Dendritic cell treated with granulocyte-macrophage colony-stimulating factor and Interleukin-4, amounts not matched to agents 40 ng/mL and 50 ng/mL, for 4 days (primary cell): ENCODE measurements at regions of chr14 and their contacts with region 1.

Region 1: DNA sequence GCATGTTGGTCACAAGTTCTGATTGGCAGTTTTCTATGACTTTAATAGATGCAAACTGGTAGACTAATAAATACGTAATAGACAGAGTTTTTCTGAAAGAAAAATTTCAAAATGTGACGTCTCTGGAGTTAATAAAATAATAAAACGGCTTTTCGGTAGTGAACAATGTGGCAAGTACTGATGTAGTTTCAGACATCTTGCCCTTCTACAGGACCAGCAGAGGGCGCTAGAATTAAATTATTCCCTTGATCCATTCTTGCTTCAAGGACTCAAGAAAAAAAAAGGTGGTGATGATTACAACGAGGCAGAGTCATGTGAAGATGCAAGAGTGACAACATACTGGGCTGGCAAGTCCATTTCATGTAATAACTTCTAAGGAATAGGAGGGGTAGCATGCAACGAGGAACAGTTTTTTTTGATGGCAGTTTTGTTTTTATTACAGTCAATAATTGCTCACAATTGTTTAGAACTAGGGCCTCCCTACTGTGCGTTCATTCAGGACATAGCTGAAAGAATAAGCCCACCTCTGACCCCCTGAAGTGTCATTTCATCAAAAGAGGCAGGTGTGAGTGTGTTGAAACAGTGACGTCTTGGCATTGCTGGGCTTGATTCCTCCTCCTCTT is 101.0 kb upstream of the GZMB start:
- H3K4me3 Mint-ChIP-seq: no peak overlapping the region
- H3K27ac Mint-ChIP-seq: no peak overlapping the region
- H3K4me1 Mint-ChIP-seq: no peaks in the 10 kb centered on the region
- H3K27me3 Mint-ChIP-seq: no peaks in the 10 kb centered on the region

Region 2: GRCh38 chr14:24818058-24818822 is 83.3 kb after region 1 on chr14:
- intact Hi-C with region 1: no loop called
- H3K4me3 Mint-ChIP-seq: no peak overlapping the region
- H3K27ac Mint-ChIP-seq: no peak overlapping the region
- H3K4me1 Mint-ChIP-seq: no peaks in the 10 kb centered on the region
- H3K27me3 Mint-ChIP-seq: peaks cover 9% of the 10 kb centered on the region

Region 3: DNA sequence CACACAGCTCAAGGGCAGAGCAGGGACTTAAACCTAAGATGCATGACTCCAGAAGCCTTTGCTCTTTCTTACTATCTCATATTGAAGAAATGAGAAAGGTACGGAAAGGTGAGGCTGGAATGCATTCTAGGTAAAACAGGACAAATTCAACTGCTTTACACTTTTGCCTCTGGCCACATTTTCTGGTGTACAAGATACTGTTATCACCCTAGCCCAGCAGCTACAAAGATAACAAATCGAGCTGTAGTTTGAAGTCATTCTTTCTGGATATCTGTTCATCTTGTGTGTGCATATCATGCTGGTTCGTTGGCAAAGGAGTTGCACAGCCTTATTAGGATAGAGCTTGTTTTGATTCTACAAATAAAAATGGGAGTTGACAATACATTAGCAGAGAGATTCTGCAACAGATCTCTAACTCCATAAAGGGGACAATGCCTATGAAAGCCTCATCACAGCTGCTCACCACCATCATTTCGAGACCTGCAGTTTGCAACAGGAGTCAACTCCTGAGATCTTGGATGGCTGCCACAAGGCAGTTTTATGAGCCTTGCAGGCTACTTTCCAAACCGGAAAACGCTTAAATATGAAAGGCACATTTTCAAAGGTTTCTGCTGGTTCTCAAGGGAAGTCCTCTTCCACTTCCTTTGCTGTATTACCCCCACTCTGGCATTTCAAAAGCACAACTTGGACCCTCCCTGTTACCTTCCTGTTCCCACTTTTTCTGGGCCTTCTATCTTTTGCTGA is 250.0 kb after region 1 on chr14:
- intact Hi-C with region 1: no loop called
- H3K4me3 Mint-ChIP-seq: no peak overlapping the region
- H3K27ac Mint-ChIP-seq: no peak overlapping the region
- H3K4me1 Mint-ChIP-seq: peaks cover 26% of the 10 kb centered on the region
- H3K27me3 Mint-ChIP-seq: no peaks in the 10 kb centered on the region

Region 4: GRCh38 chr14:25132732-25133422 is 397.9 kb after region 1 on chr14:
- intact Hi-C with region 1: loop called (anchors 1 kb)
- H3K4me3 Mint-ChIP-seq: no peak overlapping the region
- H3K27ac Mint-ChIP-seq: no peak overlapping the region
- H3K4me1 Mint-ChIP-seq: peaks cover 8% of the 10 kb centered on the region
- H3K27me3 Mint-ChIP-seq: peaks cover 46% of the 10 kb centered on the region

Region 5: GRCh38 chr14:25150934-25151790 is 416.2 kb after region 1 on chr14:
- intact Hi-C with region 1: loop called (anchors 1 kb)
- H3K4me3 Mint-ChIP-seq: no peak overlapping the region
- H3K27ac Mint-ChIP-seq: no peak overlapping the region
- H3K4me1 Mint-ChIP-seq: peaks cover 5% of the 10 kb centered on the region
- H3K27me3 Mint-ChIP-seq: peaks cover 10% of the 10 kb centered on the region

Region 6: DNA sequence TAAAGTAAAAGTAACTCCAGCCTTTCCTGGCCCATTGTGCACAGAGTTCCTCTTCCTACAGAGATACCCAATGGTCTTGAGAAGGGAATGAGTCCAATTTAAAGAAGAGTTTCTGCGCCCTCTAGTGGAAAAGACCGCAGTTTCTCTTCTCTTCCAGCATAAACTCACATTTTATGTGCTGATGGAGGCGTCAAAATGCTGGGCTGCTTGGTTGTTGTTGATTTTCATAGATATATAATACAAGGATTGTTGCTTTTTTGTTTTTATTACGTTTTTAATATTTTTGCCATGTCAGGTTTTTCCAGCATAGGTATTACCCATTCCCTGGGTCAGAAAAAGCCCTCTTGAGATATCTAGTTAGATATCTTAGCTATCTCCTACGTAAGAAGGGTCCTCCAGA is 671.8 kb after region 1 on chr14:
- intact Hi-C with region 1: loop called (anchors 5 kb)
- H3K4me3 Mint-ChIP-seq: no peak overlapping the region
- H3K27ac Mint-ChIP-seq: no peak overlapping the region
- H3K4me1 Mint-ChIP-seq: no peaks in the 10 kb centered on the region
- H3K27me3 Mint-ChIP-seq: no peaks in the 10 kb centered on the region